Activated T-helper 2 cell treated with anti-CD3 and anti-CD28 coated beads, Interferon-gamma antibody, Interleukin-2, Interleukin-4, amounts not matched to agents 10 μg/mL and 5 μg/mL and 100 μg/mL, durations not matched to agents 14 hours and 24 hours and 36 hours (primary cell): ENCODE measurements at regions of chr9 and their contacts with region 1.

Region 1: DNA sequence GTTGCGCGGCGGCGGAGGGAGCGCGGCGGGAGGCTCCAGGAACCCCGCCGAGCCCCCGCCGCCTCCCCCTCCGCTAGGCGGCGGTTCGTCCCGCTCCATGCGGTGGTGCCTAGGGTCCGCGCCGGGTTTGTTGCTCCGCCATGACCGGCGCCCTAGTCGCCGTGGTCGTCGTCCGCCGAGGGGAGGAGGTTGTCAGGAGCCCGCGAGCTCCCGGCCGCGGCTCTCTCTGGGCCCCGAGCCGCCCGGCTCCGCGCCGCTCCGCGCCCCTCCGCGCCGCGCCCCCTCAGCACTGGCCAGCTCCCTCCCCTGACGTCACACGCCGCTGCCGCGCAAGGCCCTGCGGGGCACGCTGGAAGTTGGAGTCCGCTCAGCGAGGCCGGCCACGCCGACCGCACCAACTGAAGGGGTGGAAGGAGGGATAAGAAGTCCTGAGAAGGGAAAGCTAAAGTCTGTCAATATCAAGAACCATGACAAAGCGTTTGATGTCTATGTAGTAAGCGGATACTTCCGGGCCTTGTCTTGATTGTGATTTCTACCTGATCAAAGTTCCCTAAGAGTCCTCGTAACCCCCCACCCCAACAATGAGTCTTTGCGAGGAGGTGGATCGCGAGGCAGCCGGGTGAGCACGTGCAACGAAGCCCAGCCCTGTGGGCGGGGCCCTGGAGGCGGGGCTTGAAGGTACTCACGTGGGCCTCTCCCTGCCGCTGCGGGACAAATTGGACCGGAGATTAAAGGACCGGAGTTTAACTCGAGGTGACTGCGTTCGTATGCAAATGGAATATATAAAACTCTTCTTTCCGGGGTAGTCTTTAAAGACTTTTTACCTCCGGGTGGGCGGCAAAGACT is at the start of gene NR6A1:
- DNase-seq: peak; percentile 92
- H3K4me3 Mint-ChIP-seq: peak within 1 kb of the TSS; percentile 87
- H3K27ac Mint-ChIP-seq: peak within 1 kb of the TSS; percentile 76
- H3K4me1 Mint-ChIP-seq: peaks cover 31% of the 10 kb centered on the region
- H3K27me3 Mint-ChIP-seq: peaks cover 57% of the 10 kb centered on the region
- total RNA-seq, gene NR6A1: 1.5 and 1.8 TPM in 2 replicates

Region 2: DNA sequence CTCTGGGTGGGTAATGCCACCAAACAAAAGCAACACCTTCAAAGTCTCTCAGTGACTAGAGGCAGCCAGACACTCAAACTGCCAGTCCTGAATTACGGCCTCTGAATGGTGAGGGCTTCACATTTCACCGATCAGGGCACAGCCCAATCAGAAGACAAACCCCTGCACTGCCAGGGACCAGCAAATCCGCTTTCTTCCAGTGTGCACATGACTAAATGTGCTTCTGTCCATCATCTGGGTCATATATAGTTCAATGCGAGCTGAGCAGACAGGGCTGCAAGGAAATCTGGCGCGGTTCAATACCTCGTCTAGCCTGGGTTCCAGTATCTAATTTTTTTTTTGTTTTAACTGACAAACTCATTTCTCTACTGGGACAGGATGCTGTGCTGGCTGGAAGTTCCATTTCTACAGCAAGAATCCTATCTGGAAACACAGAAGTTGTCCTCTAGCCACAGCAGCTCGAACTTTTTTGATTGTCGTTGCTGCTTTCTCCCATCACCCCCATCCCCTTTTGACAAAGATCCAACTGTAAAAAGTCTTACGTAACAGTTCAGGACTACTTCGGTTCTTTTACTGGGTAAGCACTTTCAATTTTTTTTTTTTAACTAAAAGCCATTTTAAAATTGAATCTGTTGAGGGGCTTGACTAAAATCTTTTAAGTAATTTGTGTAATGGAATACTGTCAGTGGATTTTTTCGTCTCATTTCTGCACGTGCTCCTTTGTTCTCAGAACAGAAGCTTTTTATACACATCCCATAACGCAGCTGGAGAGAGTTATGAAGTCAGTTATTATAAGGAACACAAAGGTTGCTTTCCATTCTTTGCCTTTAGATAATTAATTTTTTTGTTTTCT is 112.9 kb before region 1 on chr9:
- intact Hi-C with region 1: loop called (anchors 5 kb)
- DNase-seq: peak; percentile 40
- H3K4me3 Mint-ChIP-seq: peak overlapping the region; percentile 86
- H3K27ac Mint-ChIP-seq: peak overlapping the region; percentile 58
- H3K4me1 Mint-ChIP-seq: peaks cover 28% of the 10 kb centered on the region
- H3K27me3 Mint-ChIP-seq: peaks cover 3% of the 10 kb centered on the region

Region 3: GRCh38 chr9:124852829-124853531 is 81.7 kb after region 1 on chr9 and contains the start of gene WDR38:
- intact Hi-C with region 1: loop called (anchors 1 kb)
- DNase-seq: peak; percentile 74
- H3K4me3 Mint-ChIP-seq: peak within 1 kb of the TSS; percentile 66
- H3K27ac Mint-ChIP-seq: no peak within 1 kb of the TSS
- H3K4me1 Mint-ChIP-seq: peaks cover 6% of the 10 kb centered on the region
- H3K27me3 Mint-ChIP-seq: peaks cover 8% of the 10 kb centered on the region
- total RNA-seq, gene WDR38: not detected in 2 replicates

Region 4: GRCh38 chr9:124894741-124895170 is 123.5 kb after region 1 on chr9:
- intact Hi-C with region 1: loop called (anchors 1 kb)
- DNase-seq: peak; percentile 16
- H3K4me3 Mint-ChIP-seq: no peak overlapping the region
- H3K27ac Mint-ChIP-seq: peak overlapping the region; percentile 0
- H3K4me1 Mint-ChIP-seq: peaks cover 4% of the 10 kb centered on the region
- H3K27me3 Mint-ChIP-seq: no peaks in the 10 kb centered on the region

Region 5: DNA sequence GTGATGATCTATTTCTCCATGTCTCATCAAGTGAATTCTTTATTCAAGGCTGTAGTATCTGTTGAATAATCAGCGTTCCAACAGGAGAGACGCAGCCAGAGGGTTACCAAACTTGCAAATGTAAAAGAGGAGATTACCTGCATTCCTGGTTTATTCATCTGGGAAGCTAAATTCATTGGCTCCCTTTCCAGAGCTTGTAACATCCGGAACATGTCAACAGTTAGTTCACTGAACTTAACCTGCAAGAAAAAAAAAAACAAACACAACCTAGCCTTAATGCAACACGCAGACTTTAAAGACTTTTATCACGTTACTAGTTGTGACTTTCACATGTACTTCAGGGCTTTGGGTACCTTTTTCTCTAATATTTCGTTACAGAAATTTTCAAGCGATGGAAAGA is 232.1 kb after region 1 on chr9:
- intact Hi-C with region 1: no loop called
- DNase-seq: no peak
- H3K4me3 Mint-ChIP-seq: no peak overlapping the region
- H3K27ac Mint-ChIP-seq: no peak overlapping the region
- H3K4me1 Mint-ChIP-seq: no peaks in the 10 kb centered on the region
- H3K27me3 Mint-ChIP-seq: no peaks in the 10 kb centered on the region

Region 6: DNA sequence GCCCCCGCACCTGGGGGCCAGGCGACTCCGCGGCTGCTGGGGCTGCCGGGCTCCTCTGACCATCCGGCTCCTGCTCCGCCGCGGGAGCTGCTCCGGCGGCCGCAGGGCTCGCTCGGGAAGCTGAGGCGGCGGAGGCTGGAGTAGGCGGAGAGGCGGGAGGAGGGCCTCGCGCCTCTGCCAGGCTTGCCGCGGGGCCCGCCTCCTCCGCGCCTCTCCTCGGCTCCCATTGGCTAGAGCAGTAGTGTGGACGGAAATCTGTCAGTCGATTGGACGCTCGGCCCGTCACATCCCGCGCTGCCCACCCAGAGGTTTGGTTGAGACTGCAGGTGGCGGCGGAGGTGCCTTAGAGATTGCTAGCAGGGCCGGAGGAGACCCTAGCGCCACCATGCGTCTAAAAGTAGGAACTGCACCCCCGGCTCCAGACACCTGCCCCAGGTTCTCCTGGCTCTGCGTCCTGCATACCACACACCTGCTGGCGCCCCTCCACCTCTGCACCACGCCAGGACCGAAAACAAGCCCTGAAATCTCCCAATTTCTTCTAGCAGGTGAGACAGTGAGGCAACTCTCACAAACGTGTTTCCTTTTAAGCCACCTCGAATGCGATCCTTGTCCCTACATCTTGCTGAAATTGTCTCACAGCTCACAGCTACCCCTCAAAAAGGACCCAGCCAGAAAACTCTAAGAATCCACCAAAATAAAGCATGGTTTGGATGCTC is 372.3 kb after region 1 on chr9 and contains the start of gene SCAI:
- intact Hi-C with region 1: loop called (anchors 2 kb)
- DNase-seq: peak; percentile 98
- H3K4me3 Mint-ChIP-seq: peak within 1 kb of the TSS; percentile 97
- H3K27ac Mint-ChIP-seq: peak within 1 kb of the TSS; percentile 66
- H3K4me1 Mint-ChIP-seq: peaks cover 26% of the 10 kb centered on the region
- H3K27me3 Mint-ChIP-seq: no peaks in the 10 kb centered on the region
- total RNA-seq, gene SCAI: 14.2 and 15.9 TPM in 2 replicates

Region 7: GRCh38 chr9:125241000-125241862 is 470.0 kb after region 1 on chr9 and contains the start of gene HSPA5:
- intact Hi-C with region 1: loop called (anchors 10 kb)
- DNase-seq: peak; percentile 99
- H3K4me3 Mint-ChIP-seq: peak within 1 kb of the TSS; percentile 100
- H3K27ac Mint-ChIP-seq: peak within 1 kb of the TSS; percentile 98
- H3K4me1 Mint-ChIP-seq: peaks cover 34% of the 10 kb centered on the region
- H3K27me3 Mint-ChIP-seq: no peaks in the 10 kb centered on the region
- total RNA-seq, gene HSPA5: 283 and 285 TPM in 2 replicates

Region 8: GRCh38 chr9:125374443-125375309 is 603.4 kb after region 1 on chr9:
- intact Hi-C with region 1: loop called (anchors 1 kb)
- DNase-seq: peak; percentile 44
- H3K4me3 Mint-ChIP-seq: peak overlapping the region; percentile 37
- H3K27ac Mint-ChIP-seq: no peak overlapping the region
- H3K4me1 Mint-ChIP-seq: peaks cover 2% of the 10 kb centered on the region
- H3K27me3 Mint-ChIP-seq: peaks cover 3% of the 10 kb centered on the region